ENCODE measurements at regions of chr11 and their contacts with region 1.

Region 1: DNA sequence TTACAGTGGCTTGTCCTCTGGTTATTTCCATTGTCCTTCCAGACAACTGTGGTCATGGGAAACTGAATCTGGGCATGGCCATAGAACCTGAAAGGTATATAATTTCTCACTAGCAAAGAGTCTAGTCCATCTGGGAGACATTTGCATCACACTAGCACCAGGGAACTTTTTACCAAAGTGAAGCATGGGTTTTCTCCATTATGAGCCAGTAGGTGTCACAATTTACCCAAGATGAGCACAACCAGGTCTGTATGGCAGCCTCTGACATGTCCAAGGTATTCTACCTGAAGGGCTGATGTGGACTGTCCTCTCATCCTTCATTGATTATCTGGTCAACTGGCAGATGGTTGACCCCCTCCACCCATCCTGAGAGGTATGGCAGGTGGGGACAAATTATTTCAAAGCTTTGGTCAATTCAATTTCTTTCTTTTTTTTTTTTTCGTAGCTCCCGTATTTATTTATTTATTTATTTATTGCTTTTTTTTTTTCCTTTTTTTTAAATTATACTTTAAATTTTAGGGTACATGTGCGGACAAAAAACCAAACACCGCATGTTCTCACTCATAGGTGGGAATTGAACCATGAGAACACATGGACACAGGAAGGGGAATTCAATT is 425.9 kb downstream of the TMEM135 start:
- DNase-seq: peak; percentile 49
- H3K4me3 ChIP-seq: no peak overlapping the region
- H3K27ac ChIP-seq: no peak overlapping the region
- H3K4me1 ChIP-seq: no peaks in the 10 kb centered on the region
- H3K27me3 ChIP-seq: peaks cover 20% of the 10 kb centered on the region
- CTCF ChIP-seq: peak; percentile 65

Region 2: GRCh38 chr11:86916330-86916729 is 547.3 kb before region 1 on chr11:
- CTCF ChIA-PET with region 1: no interaction called
- POLR2A ChIA-PET with region 1: no interaction called
- intact Hi-C with region 1: no loop called
- DNase-seq: peak; percentile 95
- H3K4me3 ChIP-seq: peak overlapping the region; percentile 16
- H3K27ac ChIP-seq: peak overlapping the region; percentile 87
- H3K4me1 ChIP-seq: peaks cover 53% of the 10 kb centered on the region
- H3K27me3 ChIP-seq: no peaks in the 10 kb centered on the region
- CTCF ChIP-seq: no peak

Region 3: GRCh38 chr11:87213444-87213843 is 250.2 kb before region 1 on chr11:
- CTCF ChIA-PET with region 1: no interaction called
- POLR2A ChIA-PET with region 1: no interaction called
- intact Hi-C with region 1: no loop called
- DNase-seq: no peak
- H3K4me3 ChIP-seq: no peak overlapping the region
- H3K27ac ChIP-seq: no peak overlapping the region
- H3K4me1 ChIP-seq: peaks cover 10% of the 10 kb centered on the region
- H3K27me3 ChIP-seq: no peaks in the 10 kb centered on the region
- CTCF ChIP-seq: no peak

Region 4: GRCh38 chr11:87358461-87358860 is 105.1 kb before region 1 on chr11:
- CTCF ChIA-PET with region 1: interaction called, 10 read pairs
- POLR2A ChIA-PET with region 1: no interaction called
- intact Hi-C with region 1: no loop called
- DNase-seq: no peak
- H3K4me3 ChIP-seq: no peak overlapping the region
- H3K27ac ChIP-seq: no peak overlapping the region
- H3K4me1 ChIP-seq: no peaks in the 10 kb centered on the region
- H3K27me3 ChIP-seq: no peaks in the 10 kb centered on the region
- CTCF ChIP-seq: no peak

Region 5: GRCh38 chr11:87451395-87451794 is 12.2 kb before region 1 on chr11:
- CTCF ChIA-PET with region 1: no interaction called
- POLR2A ChIA-PET with region 1: no interaction called
- intact Hi-C with region 1: no loop called
- DNase-seq: no peak
- H3K4me3 ChIP-seq: no peak overlapping the region
- H3K27ac ChIP-seq: no peak overlapping the region
- H3K4me1 ChIP-seq: no peaks in the 10 kb centered on the region
- H3K27me3 ChIP-seq: peaks cover 8% of the 10 kb centered on the region
- CTCF ChIP-seq: no peak

Region 6: DNA sequence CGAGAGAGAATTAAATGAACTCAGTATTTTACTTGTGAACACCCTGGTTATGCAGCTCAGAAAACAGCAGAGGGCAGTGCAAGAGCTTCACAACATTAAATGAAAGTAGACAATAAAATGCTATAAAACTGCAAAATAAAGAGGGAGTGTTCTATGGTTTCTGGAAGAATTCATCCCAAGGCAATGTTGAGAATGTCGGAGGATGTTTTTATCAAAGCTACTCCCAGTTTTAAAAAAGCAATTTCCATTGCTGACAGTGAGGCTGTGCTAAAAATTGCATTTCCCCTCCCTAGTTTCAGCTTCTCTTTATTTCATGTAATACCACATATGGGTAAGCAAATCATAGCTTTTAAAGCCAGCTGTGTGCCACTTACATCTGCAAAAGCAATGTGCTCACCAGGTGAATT is 414.8 kb after region 1 on chr11:
- CTCF ChIA-PET with region 1: interaction called, 3 read pairs
- POLR2A ChIA-PET with region 1: no interaction called
- intact Hi-C with region 1: loop called (anchors 5 kb)
- DNase-seq: peak; percentile 58
- H3K4me3 ChIP-seq: no peak overlapping the region
- H3K27ac ChIP-seq: no peak overlapping the region
- H3K4me1 ChIP-seq: no peaks in the 10 kb centered on the region
- H3K27me3 ChIP-seq: peaks cover 9% of the 10 kb centered on the region
- CTCF ChIP-seq: peak; percentile 70